ENCODE measurements at regions of chr21 and their contacts with region 1.

Region 1: GRCh38 chr21:42609811-42610210 is 43.6 kb upstream of the PDE9A start:
- DNase-seq: no peak
- H3K4me3 Mint-ChIP-seq: no peak overlapping the region
- H3K27ac Mint-ChIP-seq: no peak overlapping the region
- H3K4me1 Mint-ChIP-seq: peaks cover 24% of the 10 kb centered on the region
- H3K27me3 Mint-ChIP-seq: no peaks in the 10 kb centered on the region
- CTCF ChIP-seq: no peak

Region 2: DNA sequence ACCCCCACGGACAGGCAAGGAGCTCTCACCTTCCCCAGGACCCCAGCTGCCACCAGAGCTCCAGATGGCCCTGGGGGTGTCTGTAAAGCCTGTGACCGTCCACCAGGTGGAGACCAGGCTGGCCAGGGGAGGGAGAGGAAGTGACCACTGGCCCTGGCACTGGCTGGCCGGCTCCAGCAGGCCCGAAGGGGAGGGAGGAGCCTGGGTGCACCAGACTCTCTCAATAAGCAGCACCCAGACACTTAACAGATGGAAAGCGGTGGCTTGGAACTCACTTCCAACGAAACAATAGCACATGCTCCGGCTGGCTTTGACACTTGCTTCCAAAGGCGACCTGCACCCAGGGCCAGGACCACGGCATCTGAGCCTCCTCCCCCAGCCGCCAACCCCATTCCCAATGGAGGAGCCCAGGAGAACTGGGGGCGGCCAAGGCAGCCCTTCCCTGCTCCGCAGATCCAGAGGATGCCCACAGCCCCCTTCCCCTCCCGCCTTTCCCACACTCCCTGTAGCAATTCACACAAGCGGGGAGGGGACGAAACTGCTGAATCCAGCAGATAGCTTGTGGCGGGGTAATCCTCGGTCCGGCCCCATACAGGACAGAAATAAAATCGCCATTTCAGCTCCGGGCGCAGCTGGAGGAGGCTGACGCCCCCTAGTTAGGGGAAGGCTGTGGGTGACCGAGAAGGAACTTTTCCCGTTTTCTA is 42.9 kb after region 1 on chr21:
- CTCF ChIA-PET with region 1: no interaction called
- intact Hi-C with region 1: loop called (anchors 5 kb)
- DNase-seq: peak; percentile 74
- H3K4me3 Mint-ChIP-seq: peak overlapping the region; percentile 66
- H3K27ac Mint-ChIP-seq: no peak overlapping the region
- H3K4me1 Mint-ChIP-seq: peaks cover 19% of the 10 kb centered on the region
- H3K27me3 Mint-ChIP-seq: peaks cover 13% of the 10 kb centered on the region
- CTCF ChIP-seq: peak; percentile 46

Region 3: DNA sequence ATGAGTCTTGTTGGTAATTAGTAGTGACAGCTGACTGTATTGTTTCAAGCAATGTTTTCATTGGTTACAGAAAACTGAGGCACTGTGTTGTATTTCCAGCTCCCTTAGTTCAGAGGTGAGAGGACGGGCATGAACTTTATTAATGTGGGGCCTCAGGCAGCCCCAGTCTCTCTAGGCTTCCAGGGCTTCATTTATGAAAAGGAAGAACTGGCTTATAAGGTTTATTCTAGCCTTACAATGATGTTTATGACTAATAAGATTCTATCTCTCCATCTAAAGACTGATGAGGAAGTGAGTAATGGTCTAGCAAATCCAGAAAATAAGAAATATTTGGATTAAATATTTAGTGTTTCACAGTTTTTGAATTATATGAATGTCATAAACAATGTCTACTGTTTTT is 424.3 kb after region 1 on chr21:
- CTCF ChIA-PET with region 1: no interaction called
- intact Hi-C with region 1: no loop called
- DNase-seq: no peak
- H3K4me3 Mint-ChIP-seq: no peak overlapping the region
- H3K27ac Mint-ChIP-seq: no peak overlapping the region
- H3K4me1 Mint-ChIP-seq: no peaks in the 10 kb centered on the region
- H3K27me3 Mint-ChIP-seq: no peaks in the 10 kb centered on the region
- CTCF ChIP-seq: no peak